Activated naive CD4-positive, alpha-beta T cell treated with anti-CD3 and anti-CD28 coated beads for 36 hours (primary cell): ENCODE measurements at regions of chr2 and their contacts with region 1.

Region 1: DNA sequence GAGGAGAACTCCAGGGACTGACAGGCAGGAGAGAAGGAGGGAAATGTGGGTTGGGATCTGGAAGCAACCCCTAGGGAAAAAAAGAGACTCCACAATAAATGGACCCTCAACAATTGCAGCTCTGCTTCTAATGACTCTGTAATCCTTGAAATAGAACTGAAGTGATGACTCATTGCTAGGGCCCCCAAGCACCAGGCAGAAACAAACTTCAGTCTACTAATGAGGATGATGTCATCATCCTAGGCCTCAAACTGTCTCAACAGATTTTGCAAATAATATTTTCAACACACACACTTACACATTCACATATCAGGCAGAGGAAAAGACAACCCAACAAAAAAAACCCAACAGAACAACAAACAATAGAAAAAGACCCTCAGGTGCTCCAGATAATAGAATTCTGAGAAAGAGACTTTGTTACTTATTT is 143.3 kb downstream of the HDAC4 start:
- DNase-seq: peak; percentile 53
- H3K4me3 Mint-ChIP-seq: peak overlapping the region; percentile 17
- H3K27ac Mint-ChIP-seq: peak overlapping the region; percentile 85
- H3K4me1 Mint-ChIP-seq: peaks cover 87% of the 10 kb centered on the region
- H3K27me3 Mint-ChIP-seq: no peaks in the 10 kb centered on the region

Region 2: DNA sequence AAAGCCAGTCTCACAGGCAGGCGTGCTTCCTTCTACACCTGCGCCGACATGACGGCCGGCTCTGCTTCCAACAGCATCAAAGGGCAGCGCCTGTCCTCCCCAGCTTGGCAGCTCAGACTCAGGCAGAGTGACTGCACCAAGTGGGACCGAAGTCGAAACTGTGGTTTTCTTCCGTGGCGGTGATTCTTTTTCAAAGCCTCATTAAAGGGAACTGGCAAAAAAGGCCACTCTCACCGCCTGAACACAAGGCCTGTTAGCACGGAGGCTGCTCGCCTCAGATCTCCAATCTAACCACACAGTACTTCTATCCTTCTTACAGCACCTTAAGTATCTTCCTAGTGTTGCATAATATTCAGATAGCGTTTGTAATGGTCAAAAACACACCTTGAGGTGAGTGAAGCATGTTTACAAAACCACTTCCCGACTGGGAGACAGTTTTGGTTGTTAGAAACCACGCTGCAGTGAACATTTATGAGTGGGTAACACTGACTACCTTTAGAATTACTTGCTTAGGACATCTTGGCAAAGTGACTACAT is 93.1 kb before region 1 on chr2:
- CTCF ChIA-PET with region 1: no interaction called
- intact Hi-C with region 1: loop called (anchors 5 kb)
- DNase-seq: peak; percentile 34
- H3K4me3 Mint-ChIP-seq: no peak overlapping the region
- H3K27ac Mint-ChIP-seq: no peak overlapping the region
- H3K4me1 Mint-ChIP-seq: peaks cover 16% of the 10 kb centered on the region
- H3K27me3 Mint-ChIP-seq: no peaks in the 10 kb centered on the region

Region 3: GRCh38 chr2:239216614-239217273 is 40.8 kb before region 1 on chr2:
- CTCF ChIA-PET with region 1: no interaction called
- intact Hi-C with region 1: loop called (anchors 1 kb)
- DNase-seq: peak; percentile 72
- H3K4me3 Mint-ChIP-seq: peak overlapping the region; percentile 69
- H3K27ac Mint-ChIP-seq: peak overlapping the region; percentile 87
- H3K4me1 Mint-ChIP-seq: peaks cover 71% of the 10 kb centered on the region
- H3K27me3 Mint-ChIP-seq: no peaks in the 10 kb centered on the region

Region 4: DNA sequence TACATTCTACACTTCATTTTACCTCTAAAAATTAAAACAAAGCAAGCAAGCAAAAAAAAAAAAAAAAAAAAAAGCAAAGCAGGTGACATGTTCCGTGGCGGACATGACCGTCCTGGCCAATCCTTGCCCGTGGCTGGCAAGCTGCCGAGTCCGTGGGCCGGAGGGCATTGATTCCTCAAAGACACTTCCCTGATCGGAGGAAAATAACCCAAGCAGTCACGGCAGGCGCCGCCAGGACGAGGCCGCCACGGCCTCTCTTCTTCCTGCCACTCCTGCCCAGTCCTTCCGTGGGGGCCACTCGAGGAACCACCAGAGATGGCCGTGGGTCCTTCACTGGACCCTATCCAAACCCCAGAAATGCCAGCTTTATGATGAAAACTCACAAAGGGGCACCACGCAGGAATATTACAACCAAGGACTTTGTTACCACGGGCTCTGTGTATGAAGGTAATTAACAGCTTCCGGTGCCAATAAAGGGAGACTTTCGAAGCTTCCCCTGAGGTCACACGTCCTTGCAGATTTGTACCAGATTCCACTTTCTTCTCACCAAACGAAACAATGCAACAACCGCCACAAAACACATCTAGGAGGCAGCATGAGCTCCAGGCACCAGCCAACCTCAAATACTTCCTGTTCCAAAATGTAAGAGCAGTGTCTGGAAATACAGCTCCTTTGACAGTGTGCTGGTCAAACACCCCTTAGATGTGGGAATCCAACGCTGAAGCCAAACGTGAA is 27.0 kb before region 1 on chr2:
- CTCF ChIA-PET with region 1: no interaction called
- intact Hi-C with region 1: loop called (anchors 1 kb)
- DNase-seq: peak; percentile 42
- H3K4me3 Mint-ChIP-seq: peak overlapping the region; percentile 60
- H3K27ac Mint-ChIP-seq: peak overlapping the region; percentile 79
- H3K4me1 Mint-ChIP-seq: peaks cover 70% of the 10 kb centered on the region
- H3K27me3 Mint-ChIP-seq: no peaks in the 10 kb centered on the region

Region 5: GRCh38 chr2:239275044-239275685 is 17.6 kb after region 1 on chr2:
- CTCF ChIA-PET with region 1: no interaction called
- intact Hi-C with region 1: loop called (anchors 1 kb)
- DNase-seq: peak; percentile 93
- H3K4me3 Mint-ChIP-seq: peak overlapping the region; percentile 51
- H3K27ac Mint-ChIP-seq: peak overlapping the region; percentile 77
- H3K4me1 Mint-ChIP-seq: peaks cover 51% of the 10 kb centered on the region
- H3K27me3 Mint-ChIP-seq: peaks cover 24% of the 10 kb centered on the region

Region 6: GRCh38 chr2:239298116-239298804 is 40.7 kb after region 1 on chr2:
- CTCF ChIA-PET with region 1: interaction called, 4 read pairs
- intact Hi-C with region 1: loop called (anchors 5 kb)
- DNase-seq: peak; percentile 91
- H3K4me3 Mint-ChIP-seq: peak overlapping the region; percentile 67
- H3K27ac Mint-ChIP-seq: peak overlapping the region; percentile 74
- H3K4me1 Mint-ChIP-seq: peaks cover 74% of the 10 kb centered on the region
- H3K27me3 Mint-ChIP-seq: peaks cover 2% of the 10 kb centered on the region

Region 7: DNA sequence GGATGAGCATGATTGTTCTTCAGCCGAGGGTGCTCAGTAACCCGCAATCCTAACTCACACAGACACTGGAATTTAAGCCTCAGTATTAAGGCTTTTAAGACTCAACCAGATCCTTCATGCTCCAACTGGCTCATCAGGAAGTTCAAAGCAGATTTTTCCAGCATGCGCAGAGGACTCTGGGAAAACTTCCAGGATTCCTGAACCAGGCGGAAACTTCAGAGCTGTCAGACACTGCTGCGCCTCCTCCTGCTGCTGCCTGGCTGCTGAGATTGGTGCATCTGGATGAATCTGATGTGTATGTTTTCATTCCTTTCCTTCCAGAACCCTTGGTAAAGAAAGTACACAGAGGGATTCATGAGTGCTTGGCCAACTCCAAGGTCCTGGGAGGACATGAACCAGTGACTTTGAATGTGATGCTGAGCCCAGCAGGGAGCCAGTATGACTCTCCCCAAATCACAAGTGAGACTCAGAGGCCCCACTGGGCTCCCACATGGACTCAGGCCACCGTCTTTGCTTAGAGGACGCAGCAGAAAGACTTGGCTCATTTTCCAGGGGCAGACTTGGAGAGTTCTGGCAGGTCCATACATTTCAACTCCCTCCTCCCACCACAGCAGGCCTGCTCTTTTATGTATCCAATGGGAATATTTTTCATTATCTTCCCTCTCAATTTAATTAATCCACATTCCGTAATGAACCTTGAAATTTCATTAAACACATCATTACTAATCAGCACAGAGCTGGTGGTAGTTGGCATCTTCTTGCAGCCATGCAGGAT is 286.8 kb after region 1 on chr2:
- CTCF ChIA-PET with region 1: no interaction called
- intact Hi-C with region 1: loop called (anchors 2 kb)
- DNase-seq: no peak
- H3K4me3 Mint-ChIP-seq: no peak overlapping the region
- H3K27ac Mint-ChIP-seq: no peak overlapping the region
- H3K4me1 Mint-ChIP-seq: peaks cover 35% of the 10 kb centered on the region
- H3K27me3 Mint-ChIP-seq: peaks cover 11% of the 10 kb centered on the region